Aorta (tissue), 5 donors: ENCODE measurements at regions of chr9 and their contacts with region 1.

Region 1: DNA sequence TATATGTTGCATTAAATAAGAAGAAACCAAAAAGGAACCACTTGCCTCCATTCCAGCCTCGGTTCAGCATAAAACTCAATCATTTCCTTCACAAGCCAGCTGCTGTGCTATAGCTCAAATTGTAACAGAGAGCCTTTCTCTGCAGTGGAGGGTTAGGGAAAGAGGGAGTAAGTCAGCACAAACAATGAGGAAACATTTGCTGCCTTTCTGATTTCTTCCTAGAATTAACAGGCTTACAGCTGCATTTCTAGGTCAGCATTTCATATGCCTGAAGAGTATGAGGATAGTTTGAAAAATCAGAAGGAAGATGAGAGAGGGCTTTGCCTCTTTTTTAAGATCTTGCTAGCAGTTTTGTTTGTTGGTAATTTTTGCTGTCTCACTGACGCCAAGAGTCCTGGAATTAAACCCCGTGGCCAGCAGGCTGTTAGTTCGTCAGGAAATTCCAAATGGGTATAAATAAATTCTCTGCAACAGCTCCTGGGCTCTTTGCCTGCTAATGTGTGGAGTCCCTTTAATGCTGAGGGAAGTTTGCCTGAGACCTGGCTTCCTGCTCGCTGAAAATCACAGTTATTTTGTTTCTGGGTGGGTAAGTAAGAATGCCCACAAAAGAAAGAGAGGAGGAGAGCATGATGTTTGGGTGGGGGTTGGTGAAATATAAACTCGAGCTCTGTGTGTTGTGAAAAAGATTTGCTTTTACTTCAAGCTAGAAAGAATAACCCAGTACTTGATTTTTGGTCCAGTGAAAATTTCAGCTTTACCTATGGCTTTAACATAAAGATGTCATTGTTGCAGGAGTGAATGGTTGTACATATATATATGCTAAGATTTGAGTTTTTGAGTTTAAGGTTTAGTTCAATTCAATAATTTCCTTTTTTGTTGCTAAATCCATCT is 148.1 kb upstream of the DMRT1 start:
- DNase-seq: peak in 1 of 2 donors; percentile 74
- ATAC-seq: peak; percentile 83
- H3K4me3 ChIP-seq: peak overlapping the region; percentile 41 to 88
- H3K27ac ChIP-seq: peak overlapping the region; percentile 95 to 99
- H3K4me1 ChIP-seq: peaks cover 13 to 15% of the 10 kb centered on the region in 2 donors
- H3K27me3 ChIP-seq: no peaks in the 10 kb centered on the region

Region 2: DNA sequence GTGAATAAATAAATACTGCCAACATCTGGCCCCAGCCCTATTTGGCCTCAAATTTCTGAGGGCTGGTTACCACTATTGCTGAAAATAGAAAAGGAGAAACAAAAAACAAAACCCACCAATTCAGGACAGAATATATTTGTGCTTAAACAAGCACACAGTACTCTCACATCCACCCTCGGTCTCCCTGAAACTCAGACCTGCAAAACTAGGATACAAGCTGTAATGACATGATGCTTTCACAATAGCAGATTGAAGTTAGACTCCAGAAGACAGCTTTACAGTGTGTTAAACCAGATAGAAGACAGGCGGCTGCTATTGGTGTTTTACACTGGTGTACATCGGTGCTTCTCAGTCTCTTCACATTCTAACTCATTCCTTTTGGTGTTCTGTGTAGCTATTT is 66.8 kb before region 1 on chr9:
- intact Hi-C with region 1: loop called in 1 of 2 experiments (anchors 5 kb)
- DNase-seq: no peak
- ATAC-seq: peak; percentile 53
- H3K4me3 ChIP-seq: no peak overlapping the region
- H3K27ac ChIP-seq: peak overlapping the region; percentile 77 to 87
- H3K4me1 ChIP-seq: peaks cover 3 to 13% of the 10 kb centered on the region in 2 donors
- H3K27me3 ChIP-seq: no peaks in the 10 kb centered on the region

Region 3: DNA sequence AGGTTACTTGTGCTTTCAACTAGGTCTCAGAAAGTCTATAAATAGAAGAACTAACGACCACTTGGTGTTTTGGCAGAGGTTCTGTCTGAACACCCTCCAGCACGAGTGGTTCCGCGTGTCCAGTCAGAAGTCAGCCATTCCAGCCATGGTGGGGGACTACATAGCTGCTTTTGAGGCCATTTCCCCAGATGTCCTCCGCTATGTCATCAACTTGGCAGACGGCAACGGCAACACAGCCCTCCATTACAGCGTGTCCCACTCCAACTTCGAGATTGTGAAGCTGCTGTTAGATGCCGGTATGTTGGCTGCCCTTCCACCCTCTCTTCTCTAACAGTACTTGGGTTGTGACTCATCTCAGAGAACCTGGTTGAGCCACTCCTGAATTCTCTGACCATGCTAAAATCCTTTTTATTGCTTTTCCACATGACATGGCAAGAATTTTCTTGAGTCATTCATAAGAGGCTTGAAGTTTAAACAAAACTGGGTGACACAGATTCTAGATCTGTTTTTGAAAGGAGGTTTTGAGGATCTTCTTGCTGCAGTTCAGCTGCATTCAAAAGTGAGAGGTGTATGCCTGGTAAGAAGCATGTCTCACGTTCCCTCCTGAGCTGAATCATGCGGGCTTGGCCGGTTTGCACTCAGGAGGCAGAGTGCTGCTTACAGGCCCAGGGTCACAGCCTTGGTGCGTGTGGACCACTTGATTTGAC is 44.9 kb after region 1 on chr9:
- intact Hi-C with region 1: loop called (anchors 2 to 5 kb)
- DNase-seq: peak; percentile 81 to 84
- ATAC-seq: peak; percentile 76
- H3K4me3 ChIP-seq: no peak overlapping the region
- H3K27ac ChIP-seq: peak overlapping the region; percentile 96 to 100
- H3K4me1 ChIP-seq: peaks cover 2 to 6% of the 10 kb centered on the region in 2 donors
- H3K27me3 ChIP-seq: no peaks in the 10 kb centered on the region